ENCODE measurements at regions of chr5 and their contacts with region 1.

Region 1: GRCh38 chr5:113487781-113488644 is at the start of gene MCC:
- H3K4me3 ChIP-seq: peak within 1 kb of the TSS; percentile 83
- H3K27ac ChIP-seq: peak within 1 kb of the TSS; percentile 68
- H3K4me1 ChIP-seq: peaks cover 15% of the 10 kb centered on the region; the same call in 1 of the 2 replicates
- CTCF ChIP-seq: no peak

Region 2: GRCh38 chr5:113474100-113474728 is 13.8 kb before region 1 on chr5:
- CTCF ChIA-PET with region 1: interaction called, 3 read pairs
- POLR2A ChIA-PET with region 1: interaction called, 11 read pairs
- H3K4me3 ChIP-seq: no peak overlapping the region
- H3K27ac ChIP-seq: no peak overlapping the region
- H3K4me1 ChIP-seq: no peaks in the 10 kb centered on the region
- CTCF ChIP-seq: no peak

Region 3: DNA sequence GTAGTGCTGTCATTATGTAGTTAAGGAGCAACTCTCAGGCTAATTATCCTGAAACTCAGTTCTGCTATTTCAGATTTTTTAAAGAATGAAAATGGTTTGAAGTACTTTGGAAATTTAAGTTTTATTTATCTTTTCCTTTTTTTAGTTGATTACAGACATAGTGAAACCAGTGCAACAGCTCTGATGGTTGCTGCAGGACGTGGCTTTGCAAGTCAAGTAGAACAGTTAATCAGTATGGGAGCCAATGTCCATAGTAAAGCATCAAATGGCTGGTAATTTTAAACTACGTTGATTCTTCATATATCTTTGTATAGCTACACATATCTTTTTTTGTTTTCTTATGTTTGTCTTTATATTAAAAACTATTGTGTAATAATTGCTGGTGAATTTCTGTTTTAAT is 60.4 kb after region 1 on chr5:
- CTCF ChIA-PET with region 1: no interaction called
- POLR2A ChIA-PET with region 1: no interaction called
- H3K4me3 ChIP-seq: no peak overlapping the region
- H3K27ac ChIP-seq: no peak overlapping the region
- H3K4me1 ChIP-seq: no peaks in the 10 kb centered on the region
- CTCF ChIP-seq: no peak